CD8-positive, alpha-beta T cell (primary cell): ENCODE measurements at regions of chr20 and their contacts with region 1.

Region 1: DNA sequence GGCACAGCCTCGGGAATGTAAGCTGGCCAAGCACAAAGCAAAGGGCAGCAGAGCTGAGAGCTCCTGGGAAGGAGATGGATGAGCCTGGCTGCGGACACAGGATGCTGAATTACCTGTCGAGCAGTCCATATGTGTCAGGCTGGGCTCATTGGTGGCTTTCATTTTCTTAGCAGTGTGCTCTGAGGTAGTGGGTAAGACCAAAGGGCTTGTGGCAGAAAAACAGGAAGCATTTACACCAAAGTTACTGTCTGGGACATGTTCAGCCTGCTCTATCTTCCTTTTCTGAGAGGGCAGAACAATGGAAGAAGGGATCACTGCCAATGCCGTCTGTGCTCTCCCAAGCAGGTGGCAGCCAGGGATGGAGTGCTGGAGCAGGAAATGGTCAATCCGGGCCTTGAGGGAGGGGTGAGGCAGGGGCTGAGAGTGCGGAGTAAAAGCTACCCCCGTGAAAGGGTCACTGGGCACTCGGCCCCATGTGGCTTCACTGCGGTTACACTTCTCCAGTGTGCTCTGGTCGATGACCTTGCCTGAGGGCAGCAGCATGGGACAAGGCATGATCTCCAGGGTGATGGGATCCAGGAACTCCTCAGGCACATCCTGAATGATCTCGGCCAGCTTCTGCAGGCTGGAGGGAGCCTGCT is 36.9 kb upstream of the AVP start:
- DNase-seq: peak in 7 of 9 experiments; percentile 13 to 73 (median 51)
- ATAC-seq: peak; percentile 67
- H3K4me3 ChIP-seq: peak overlapping the region; percentile 8 to 23
- H3K4me3 Mint-ChIP-seq: peak overlapping the region; percentile 75
- H3K27ac ChIP-seq: peak overlapping the region; percentile 57 to 65
- H3K27ac Mint-ChIP-seq: peak overlapping the region; percentile 100
- H3K4me1 ChIP-seq: peaks cover 37% of the 10 kb centered on the region
- H3K4me1 Mint-ChIP-seq: peaks cover 47% of the 10 kb centered on the region
- H3K27me3 ChIP-seq: no peaks in the 10 kb centered on the region
- H3K27me3 Mint-ChIP-seq: no peaks in the 10 kb centered on the region
- CTCF ChIP-seq: no peak

Region 2: GRCh38 chr20:3068986-3069900 is 52.1 kb before region 1 on chr20:
- CTCF ChIA-PET with region 1: interaction called, 32 read pairs
- POLR2A ChIA-PET with region 1: no interaction called
- intact Hi-C with region 1: no loop called
- DNase-seq: peak in 6 of 9 experiments; percentile 45 to 73 (median 64)
- ATAC-seq: peak; percentile 59
- H3K4me3 ChIP-seq: no peak overlapping the region
- H3K4me3 Mint-ChIP-seq: no peak overlapping the region
- H3K27ac ChIP-seq: no peak overlapping the region
- H3K27ac Mint-ChIP-seq: no peak overlapping the region
- H3K4me1 ChIP-seq: peaks cover 13% of the 10 kb centered on the region
- H3K4me1 Mint-ChIP-seq: peaks cover 24% of the 10 kb centered on the region
- H3K27me3 ChIP-seq: no peaks in the 10 kb centered on the region
- H3K27me3 Mint-ChIP-seq: no peaks in the 10 kb centered on the region
- CTCF ChIP-seq: peak; percentile 41

Region 3: DNA sequence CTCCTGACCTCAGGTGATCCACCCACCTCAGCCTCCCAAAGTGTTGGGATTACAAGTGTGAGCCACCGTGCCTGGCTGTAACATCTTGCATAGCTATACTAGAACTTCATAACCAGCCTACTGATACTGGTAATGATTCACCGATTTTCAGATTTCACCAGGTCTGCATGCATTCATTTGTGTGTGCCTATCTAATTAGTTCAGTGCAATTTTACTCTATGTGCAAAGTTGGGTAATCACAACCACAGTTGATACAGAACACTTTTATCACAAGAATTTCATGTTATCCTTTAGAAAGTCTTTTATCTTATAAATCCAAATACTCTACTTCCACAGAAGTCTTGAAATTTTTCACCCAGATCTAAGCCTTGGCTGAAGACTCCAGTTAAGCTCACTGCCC is 16.1 kb after region 1 on chr20:
- CTCF ChIA-PET with region 1: no interaction called
- POLR2A ChIA-PET with region 1: no interaction called
- intact Hi-C with region 1: no loop called
- DNase-seq: no peak
- ATAC-seq: no peak
- H3K4me3 ChIP-seq: no peak overlapping the region
- H3K4me3 Mint-ChIP-seq: no peak overlapping the region
- H3K27ac ChIP-seq: no peak overlapping the region
- H3K27ac Mint-ChIP-seq: no peak overlapping the region
- H3K4me1 ChIP-seq: no peaks in the 10 kb centered on the region
- H3K4me1 Mint-ChIP-seq: peaks cover 25% of the 10 kb centered on the region
- H3K27me3 ChIP-seq: no peaks in the 10 kb centered on the region
- H3K27me3 Mint-ChIP-seq: no peaks in the 10 kb centered on the region
- CTCF ChIP-seq: no peak

Region 4: GRCh38 chr20:3156811-3157619 is 35.6 kb after region 1 on chr20:
- CTCF ChIA-PET with region 1: interaction called, 11 read pairs
- POLR2A ChIA-PET with region 1: interaction called, 7 read pairs
- intact Hi-C with region 1: loop called (anchors 1 to 5 kb)
- DNase-seq: peak in 1 of 9 experiments; percentile 60
- ATAC-seq: peak; percentile 80
- H3K4me3 ChIP-seq: peak overlapping the region in 1 of 2 experiments; percentile 12
- H3K4me3 Mint-ChIP-seq: peak overlapping the region; percentile 60
- H3K27ac ChIP-seq: peak overlapping the region in 1 of 2 experiments; percentile 58
- H3K27ac Mint-ChIP-seq: peak overlapping the region; percentile 90
- H3K4me1 ChIP-seq: peaks cover 43% of the 10 kb centered on the region
- H3K4me1 Mint-ChIP-seq: peaks cover 60% of the 10 kb centered on the region
- H3K27me3 ChIP-seq: no peaks in the 10 kb centered on the region
- H3K27me3 Mint-ChIP-seq: no peaks in the 10 kb centered on the region
- CTCF ChIP-seq: no peak

Region 5: DNA sequence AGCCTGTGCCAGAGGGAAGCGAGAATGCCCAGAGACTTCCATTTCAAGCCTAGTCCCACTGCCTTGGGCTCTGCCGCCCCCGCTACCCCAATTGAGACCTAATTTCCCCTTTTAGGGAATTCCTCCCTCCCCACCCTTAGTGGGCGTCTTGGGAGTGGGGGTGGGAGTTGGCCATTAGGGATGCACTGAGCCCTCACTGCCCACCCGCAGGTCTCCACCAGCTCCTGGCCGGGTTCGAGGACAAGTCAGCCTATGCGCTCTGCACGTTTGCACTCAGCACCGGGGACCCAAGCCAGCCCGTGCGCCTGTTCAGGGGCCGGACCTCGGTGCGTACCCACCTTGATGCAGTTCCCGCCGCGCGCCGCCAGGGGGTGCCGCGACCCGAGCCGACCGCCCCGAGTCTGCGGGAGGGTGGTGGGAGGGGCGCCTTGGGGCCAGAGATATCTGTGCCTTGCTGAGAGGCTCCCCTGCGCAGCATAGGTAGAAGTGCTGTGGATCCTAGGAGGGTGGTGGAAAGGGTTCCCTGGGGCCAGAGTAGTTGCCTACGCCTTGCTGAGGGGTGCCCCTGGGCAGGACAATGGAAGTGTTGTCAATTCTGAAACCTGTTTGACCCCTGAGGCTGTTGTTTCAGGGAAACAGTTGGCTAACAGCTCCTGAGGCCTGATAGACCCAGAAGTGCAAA is 97.1 kb after region 1 on chr20:
- CTCF ChIA-PET with region 1: interaction called, 4 read pairs
- POLR2A ChIA-PET with region 1: no interaction called
- intact Hi-C with region 1: loop called in 1 of 2 experiments (anchors 5 kb)
- DNase-seq: peak; percentile 63 to 85 (median 72)
- ATAC-seq: peak; percentile 84
- H3K4me3 ChIP-seq: no peak overlapping the region
- H3K4me3 Mint-ChIP-seq: no peak overlapping the region
- H3K27ac ChIP-seq: no peak overlapping the region
- H3K27ac Mint-ChIP-seq: no peak overlapping the region
- H3K4me1 ChIP-seq: peaks cover 19% of the 10 kb centered on the region
- H3K4me1 Mint-ChIP-seq: peaks cover 19% of the 10 kb centered on the region
- H3K27me3 ChIP-seq: no peaks in the 10 kb centered on the region
- H3K27me3 Mint-ChIP-seq: no peaks in the 10 kb centered on the region
- CTCF ChIP-seq: peak; percentile 88